Left ventricle myocardium inferior (tissue), 1 donor: ENCODE measurements at regions of chrX and their contacts with region 1.

Region 1: DNA sequence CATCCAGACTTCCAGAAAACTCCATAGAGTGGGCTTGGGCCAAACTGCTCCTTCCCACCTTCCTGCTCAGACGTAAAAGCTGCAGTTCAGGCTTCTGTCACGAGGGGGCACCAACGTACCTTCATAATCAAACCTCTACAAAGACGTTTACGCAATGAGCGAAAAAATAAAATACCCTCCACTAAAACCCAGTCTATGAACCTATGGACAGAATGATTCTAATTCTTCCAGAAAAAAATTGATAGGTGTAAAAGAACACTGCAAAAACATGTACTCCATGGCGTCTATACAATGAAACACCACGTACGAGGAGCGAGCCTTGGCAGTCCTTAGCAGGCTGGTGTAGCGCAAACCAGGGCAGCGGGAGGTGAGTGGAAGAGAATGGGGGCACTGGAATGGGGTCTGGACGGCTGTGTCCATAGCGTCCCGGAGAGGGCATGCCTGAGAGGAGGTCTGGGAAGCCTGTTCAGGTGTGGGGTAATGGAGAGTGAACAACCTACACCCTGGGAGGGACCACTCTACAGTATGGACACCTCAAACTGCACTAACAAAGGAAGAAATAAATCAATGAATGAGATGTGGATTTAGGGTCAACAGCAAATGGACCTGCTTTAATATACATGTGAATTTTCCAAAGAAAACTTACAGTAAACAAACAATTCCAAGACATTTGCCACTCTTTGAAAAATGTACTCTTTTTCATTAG is 14.4 kb upstream of the RAB40A start:
- DNase-seq: peak; percentile 71
- H3K4me3 ChIP-seq: peak overlapping the region; percentile 62
- H3K27ac ChIP-seq: no peak overlapping the region
- H3K4me1 ChIP-seq: no peaks in the 10 kb centered on the region
- H3K27me3 ChIP-seq: no peaks in the 10 kb centered on the region
- CTCF ChIP-seq: peak; percentile 77

Region 2: GRCh38 chrX:103817502-103817901 is 283.8 kb after region 1 on chrX:
- intact Hi-C with region 1: loop called (anchors 5 kb)
- DNase-seq: no peak
- H3K4me3 ChIP-seq: no peak overlapping the region
- H3K27ac ChIP-seq: no peak overlapping the region
- H3K4me1 ChIP-seq: no peaks in the 10 kb centered on the region
- H3K27me3 ChIP-seq: no peaks in the 10 kb centered on the region
- CTCF ChIP-seq: peak; percentile 66